GM13976 (cell line): ENCODE measurements at regions of chr7 and their contacts with region 1.

Region 1: DNA sequence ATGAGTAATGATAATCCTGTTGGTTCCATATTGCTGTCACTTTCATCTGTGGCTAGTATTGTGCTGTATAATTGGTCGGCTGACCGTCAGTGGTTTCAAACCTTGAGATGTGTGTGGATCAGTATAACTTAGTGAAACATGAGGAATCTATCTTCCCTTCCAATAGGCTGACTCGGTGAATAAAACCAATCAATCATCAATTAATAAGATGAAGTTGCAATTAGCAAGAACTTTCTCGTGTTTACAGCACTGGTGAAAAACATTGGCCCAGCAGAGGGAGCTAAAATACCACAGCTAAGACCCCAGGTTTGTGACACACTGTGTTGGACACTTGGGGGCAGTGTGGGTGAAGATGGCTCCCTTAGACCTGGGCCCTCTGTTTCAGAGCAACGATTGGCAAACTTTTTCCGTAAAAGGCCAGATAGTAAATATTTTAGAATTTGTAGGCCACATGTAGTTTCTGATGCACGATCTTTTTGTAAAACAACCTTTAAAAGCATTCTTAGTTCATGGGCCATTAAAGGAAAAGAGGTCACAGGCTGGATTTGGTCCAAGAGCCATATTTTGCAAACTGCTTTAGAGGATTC is 47.8 kb downstream of the STRA8 start:
- DNase-seq: peak; percentile 83
- CTCF ChIP-seq: peak; percentile 98

Region 2: GRCh38 chr7:134954197-134955082 is 327.0 kb before region 1 on chr7:
- in situ Hi-C with region 1: no loop called
- DNase-seq: peak; percentile 36
- CTCF ChIP-seq: peak; percentile 21

Region 3: GRCh38 chr7:135662373-135663114 is 381.1 kb after region 1 on chr7 and contains the start of gene STMP1:
- in situ Hi-C with region 1: loop called (anchors 25 kb)
- DNase-seq: peak; percentile 98
- CTCF ChIP-seq: no peak